A673 (cell line): ENCODE measurements at regions of chrX and their contacts with region 1.

Region 1: DNA sequence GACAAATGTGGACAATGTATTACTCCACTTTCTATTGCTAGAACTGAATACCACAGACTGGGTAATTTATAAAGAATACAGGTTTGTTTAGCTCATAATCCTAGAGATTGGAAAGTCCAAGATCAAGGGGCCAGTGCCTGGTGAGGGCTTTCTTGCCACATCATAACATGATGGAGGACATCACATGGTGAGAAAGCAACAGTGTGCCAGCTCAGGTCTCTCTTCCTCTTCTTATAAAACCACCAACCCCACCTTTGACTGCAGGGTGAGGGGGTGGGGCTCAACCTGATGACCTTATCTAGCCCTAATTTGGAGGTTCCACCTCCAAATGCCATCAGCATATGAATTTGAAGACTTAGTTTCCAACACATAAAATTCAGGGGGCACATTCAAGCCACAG is 105.7 kb upstream of the CXorf66 start:
- DNase-seq: no peak
- H3K4me3 ChIP-seq: no peak overlapping the region
- H3K27ac ChIP-seq: no peak overlapping the region
- H3K4me1 ChIP-seq: no peaks in the 10 kb centered on the region
- H3K27me3 ChIP-seq: no peaks in the 10 kb centered on the region
- CTCF ChIP-seq: no peak

Region 2: DNA sequence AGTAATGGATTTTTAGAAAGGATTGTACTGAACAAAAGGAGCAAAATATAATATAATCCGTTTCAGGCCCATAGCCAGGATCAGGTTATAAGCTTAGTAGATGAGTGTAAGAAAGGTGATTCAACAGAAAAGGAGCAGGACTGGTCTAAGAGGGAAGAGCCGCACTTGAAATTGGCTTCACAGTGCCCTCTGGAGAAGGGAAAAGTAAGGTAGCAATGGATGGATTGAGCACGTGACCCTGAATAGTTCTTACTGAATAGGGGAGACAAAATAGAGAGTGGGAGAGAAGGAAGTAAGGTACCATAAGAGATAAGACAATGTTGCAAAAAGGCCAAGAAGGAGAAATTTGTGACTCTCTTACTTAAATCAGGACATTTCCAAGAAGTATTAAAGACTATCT is 121.3 kb before region 1 on chrX:
- CTCF ChIA-PET with region 1: no interaction called
- POLR2A ChIA-PET with region 1: no interaction called
- intact Hi-C with region 1: no loop called
- DNase-seq: no peak
- H3K4me3 ChIP-seq: no peak overlapping the region
- H3K27ac ChIP-seq: no peak overlapping the region
- H3K4me1 ChIP-seq: no peaks in the 10 kb centered on the region
- H3K27me3 ChIP-seq: no peaks in the 10 kb centered on the region
- CTCF ChIP-seq: no peak

Region 3: DNA sequence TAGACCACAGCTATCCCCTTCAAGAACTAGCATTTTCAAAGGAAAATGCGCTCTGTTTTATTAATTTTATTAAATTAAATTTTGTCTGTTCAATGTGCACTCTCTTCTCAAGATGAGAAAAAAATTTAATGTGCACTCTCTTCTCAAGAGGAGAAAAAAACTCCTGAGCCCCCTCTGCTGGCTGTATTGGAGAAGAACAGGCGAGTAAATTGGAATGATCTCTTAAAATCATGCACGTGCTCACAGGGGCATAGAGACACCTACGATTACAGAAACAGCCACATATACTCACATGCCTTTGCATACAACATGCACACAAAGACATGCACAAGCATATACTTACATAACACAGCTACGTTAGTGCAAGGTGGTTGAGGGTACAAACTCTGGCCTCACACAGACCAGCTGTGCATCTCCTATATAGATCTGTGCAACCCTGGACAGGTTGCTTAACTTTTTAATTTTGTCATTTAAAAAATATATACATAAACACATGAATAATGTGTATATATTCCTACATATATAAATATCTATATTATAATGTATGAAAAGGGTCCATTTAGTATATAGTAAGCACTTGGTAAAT is 70.5 kb after region 1 on chrX:
- CTCF ChIA-PET with region 1: no interaction called
- POLR2A ChIA-PET with region 1: no interaction called
- intact Hi-C with region 1: loop called (anchors 1 kb)
- DNase-seq: peak; percentile 71
- H3K4me3 ChIP-seq: no peak overlapping the region
- H3K27ac ChIP-seq: no peak overlapping the region
- H3K4me1 ChIP-seq: no peaks in the 10 kb centered on the region
- H3K27me3 ChIP-seq: no peaks in the 10 kb centered on the region
- CTCF ChIP-seq: peak; percentile 78